Common myeloid progenitor, CD34-positive (primary cell): ENCODE measurements at regions of chr9 and their contacts with region 1.

Region 1: GRCh38 chr9:121376214-121376830 is 6.3 kb upstream of the STOM start:
- DNase-seq: peak; percentile 43 to 71 (median 68)
- H3K4me3 ChIP-seq: no peak overlapping the region
- H3K27ac ChIP-seq: no peak overlapping the region
- H3K4me1 ChIP-seq: peaks cover 14 to 26% (median 18%) of the 10 kb centered on the region in 4 experiments
- H3K27me3 ChIP-seq: no peaks in the 10 kb centered on the region

Region 2: GRCh38 chr9:121326130-121326838 is 50.0 kb before region 1 on chr9:
- CTCF ChIA-PET with region 1: interaction called, 158 read pairs
- POLR2A ChIA-PET with region 1: no interaction called
- DNase-seq: no peak
- H3K4me3 ChIP-seq: no peak overlapping the region
- H3K27ac ChIP-seq: no peak overlapping the region
- H3K4me1 ChIP-seq: peaks cover 0 to 7% (median 4%) of the 10 kb centered on the region in 4 experiments
- H3K27me3 ChIP-seq: no peaks in the 10 kb centered on the region

Region 3: DNA sequence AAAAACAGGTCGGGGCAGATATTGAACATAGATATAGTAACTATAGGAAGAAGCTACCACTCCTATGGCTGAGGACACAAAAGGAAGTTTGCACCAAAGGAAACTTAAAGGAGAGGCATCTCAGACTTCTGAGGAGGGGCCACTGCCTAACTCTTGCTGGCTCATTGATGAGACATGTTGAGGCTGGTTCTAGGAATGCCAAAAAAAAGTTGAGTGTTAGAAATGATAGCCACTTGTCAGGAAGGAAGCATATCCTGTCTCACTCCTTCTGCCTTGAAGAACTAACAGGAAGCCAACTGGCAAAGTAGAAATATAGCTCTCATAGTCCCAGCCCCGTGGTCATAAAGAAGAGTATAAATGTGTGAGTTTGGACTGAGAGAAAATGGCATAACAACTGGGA is 17.0 kb after region 1 on chr9:
- CTCF ChIA-PET with region 1: interaction called, 33 read pairs
- POLR2A ChIA-PET with region 1: no interaction called
- DNase-seq: no peak
- H3K4me3 ChIP-seq: peak overlapping the region in 2 of 7 experiments; percentile 22 to 40
- H3K27ac ChIP-seq: no peak overlapping the region
- H3K4me1 ChIP-seq: peaks cover 14 to 48% (median 19%) of the 10 kb centered on the region in 4 experiments
- H3K27me3 ChIP-seq: no peaks in the 10 kb centered on the region

Region 4: DNA sequence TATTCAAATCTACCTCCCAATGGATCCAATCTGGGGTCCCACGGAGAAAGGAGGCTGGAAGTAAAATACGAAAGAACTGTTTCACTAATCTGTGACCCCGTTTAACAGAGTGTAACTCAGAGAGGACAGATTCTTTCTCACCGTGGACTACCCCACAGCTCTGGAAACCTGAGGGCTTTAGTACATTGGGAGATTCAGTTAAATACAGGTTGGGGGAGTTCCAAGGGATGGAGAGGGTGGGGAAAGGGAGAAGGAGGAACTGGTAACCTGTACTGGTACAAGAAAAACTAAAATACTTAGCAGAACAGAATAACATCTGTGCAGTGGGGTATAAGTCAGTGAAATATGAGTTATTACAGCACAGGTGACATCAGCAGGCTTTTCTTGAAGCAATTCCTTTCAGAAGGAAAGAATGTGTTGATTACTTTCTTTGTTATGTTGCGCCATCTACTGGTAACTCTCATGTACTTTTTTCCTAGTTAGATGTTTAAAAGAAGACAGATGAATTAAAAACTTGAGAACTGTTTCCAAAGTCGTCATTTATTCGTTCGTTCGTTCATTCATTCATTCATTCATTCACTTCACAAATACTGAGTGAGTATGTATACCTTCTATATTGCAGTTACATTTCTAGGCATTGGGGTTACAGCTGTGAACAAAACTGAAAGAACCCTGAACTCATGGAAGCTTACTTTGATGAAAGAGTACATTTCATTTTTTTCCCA is 23.7 kb after region 1 on chr9:
- CTCF ChIA-PET with region 1: interaction called, 33 read pairs
- POLR2A ChIA-PET with region 1: no interaction called
- DNase-seq: peak; percentile 75 to 90 (median 86)
- H3K4me3 ChIP-seq: no peak overlapping the region
- H3K27ac ChIP-seq: no peak overlapping the region
- H3K4me1 ChIP-seq: peaks cover 0 to 29% (median 5%) of the 10 kb centered on the region in 4 experiments
- H3K27me3 ChIP-seq: no peaks in the 10 kb centered on the region

Region 5: GRCh38 chr9:121424024-121424432 is 47.7 kb after region 1 on chr9:
- CTCF ChIA-PET with region 1: no interaction called
- POLR2A ChIA-PET with region 1: no interaction called
- DNase-seq: no peak
- H3K4me3 ChIP-seq: no peak overlapping the region
- H3K27ac ChIP-seq: no peak overlapping the region
- H3K4me1 ChIP-seq: no peaks in the 10 kb centered on the region
- H3K27me3 ChIP-seq: no peaks in the 10 kb centered on the region